Lower lobe of right lung (tissue), 2 donors: ENCODE measurements at regions of chrX and their contacts with region 1.

Region 1: GRCh38 chrX:152632445-152633097 is 5.1 kb upstream of the GABRQ start:
- DNase-seq: no peak
- ATAC-seq: peak in 1 of 2 donors; percentile 61
- H3K4me3 ChIP-seq: no peak overlapping the region
- H3K27ac ChIP-seq: no peak overlapping the region
- H3K4me1 ChIP-seq: no peaks in the 10 kb centered on the region
- H3K27me3 ChIP-seq: peaks cover 13% of the 10 kb centered on the region
- CTCF ChIP-seq: peak; percentile 67

Region 2: GRCh38 chrX:151753313-151754041 is 879.1 kb before region 1 on chrX:
- intact Hi-C with region 1: loop called (anchors 10 kb)
- DNase-seq: peak; percentile 58
- ATAC-seq: peak; percentile 87 to 89
- H3K4me3 ChIP-seq: no peak overlapping the region
- H3K27ac ChIP-seq: no peak overlapping the region
- H3K4me1 ChIP-seq: no peaks in the 10 kb centered on the region
- H3K27me3 ChIP-seq: no peaks in the 10 kb centered on the region
- CTCF ChIP-seq: peak; percentile 74